Heart left ventricle (tissue), 16 donors: ENCODE measurements at regions of chr2 and their contacts with region 1.

Region 1: DNA sequence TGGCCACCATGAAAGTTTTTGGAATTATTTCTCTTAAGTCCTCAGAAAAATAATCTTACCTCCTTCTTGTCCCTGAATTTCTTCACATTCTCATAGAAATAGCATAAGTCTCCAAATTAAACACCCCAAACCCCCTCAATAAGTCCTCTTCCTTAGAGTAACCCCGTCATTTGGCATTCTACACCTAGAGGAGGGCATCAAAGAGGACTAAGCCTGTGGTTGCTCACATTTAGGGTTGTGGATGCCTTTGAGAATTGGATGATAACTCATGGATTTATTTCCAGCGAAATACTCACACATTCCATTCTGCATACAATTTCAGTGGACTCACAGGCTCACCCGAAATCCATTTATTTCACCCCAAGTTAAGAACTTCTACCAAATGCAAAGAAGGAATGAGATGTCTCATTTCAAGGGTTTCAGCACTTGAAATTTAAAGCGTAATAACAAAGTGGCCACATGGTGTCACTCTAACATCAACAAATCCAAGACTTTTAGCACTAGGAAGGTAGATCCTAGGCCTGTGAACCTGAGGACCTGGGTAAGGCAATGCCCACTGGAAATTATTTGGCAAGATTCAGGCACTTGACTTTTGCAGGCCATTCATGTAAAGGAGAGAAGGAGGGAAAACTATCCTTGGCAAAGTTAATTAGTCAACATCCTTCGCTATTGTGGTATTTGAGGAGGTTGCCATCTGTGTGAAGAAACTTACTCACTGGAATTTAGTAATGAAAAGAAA is 24.6 kb downstream of the DYTN start:
- DNase-seq: no peak
- ATAC-seq: peak in 3 of 4 donors; percentile 60 to 74 (median 67)
- H3K4me3 ChIP-seq: no peak overlapping the region
- H3K27ac ChIP-seq: no peak overlapping the region
- H3K4me1 ChIP-seq: no peaks in the 10 kb centered on the region
- H3K27me3 ChIP-seq: peaks cover 0 to 5% (median 0%) of the 10 kb centered on the region in 9 donors
- CTCF ChIP-seq: peak; percentile 48 to 78 (median 62)
- POLR2A ChIP-seq: no peak

Region 2: GRCh38 chr2:206736935-206737334 is 43.4 kb after region 1 on chr2:
- intact Hi-C with region 1: no loop called
- DNase-seq: no peak
- ATAC-seq: no peak
- H3K4me3 ChIP-seq: no peak overlapping the region
- H3K27ac ChIP-seq: no peak overlapping the region
- H3K4me1 ChIP-seq: no peaks in the 10 kb centered on the region
- H3K27me3 ChIP-seq: no peaks in the 10 kb centered on the region
- CTCF ChIP-seq: no peak
- POLR2A ChIP-seq: no peak

Region 3: GRCh38 chr2:206765242-206766056 is 71.9 kb after region 1 on chr2 and contains the starts of genes FASTKD2 and MDH1B:
- intact Hi-C with region 1: loop called in 1 of 10 experiments (anchors 5 kb)
- DNase-seq: peak; percentile 85 to 93 (median 91)
- ATAC-seq: peak; percentile 96 to 99 (median 98)
- H3K4me3 ChIP-seq: peak within 1 kb of the TSS; percentile 68 to 97 (median 84)
- H3K27ac ChIP-seq: peak within 1 kb of the TSS; percentile 82 to 95 (median 89)
- H3K4me1 ChIP-seq: peaks cover 3 to 43% (median 35%) of the 10 kb centered on the region in 12 donors
- H3K27me3 ChIP-seq: peaks cover 0 to 3% (median 0%) of the 10 kb centered on the region in 9 donors
- CTCF ChIP-seq: no peak
- POLR2A ChIP-seq: no peak
- total RNA-seq, gene FASTKD2: 32.6 to 48.0 (median 42.4) TPM
- total RNA-seq, gene MDH1B: 0.30 to 2.0 (median 1.1) TPM

Region 4: DNA sequence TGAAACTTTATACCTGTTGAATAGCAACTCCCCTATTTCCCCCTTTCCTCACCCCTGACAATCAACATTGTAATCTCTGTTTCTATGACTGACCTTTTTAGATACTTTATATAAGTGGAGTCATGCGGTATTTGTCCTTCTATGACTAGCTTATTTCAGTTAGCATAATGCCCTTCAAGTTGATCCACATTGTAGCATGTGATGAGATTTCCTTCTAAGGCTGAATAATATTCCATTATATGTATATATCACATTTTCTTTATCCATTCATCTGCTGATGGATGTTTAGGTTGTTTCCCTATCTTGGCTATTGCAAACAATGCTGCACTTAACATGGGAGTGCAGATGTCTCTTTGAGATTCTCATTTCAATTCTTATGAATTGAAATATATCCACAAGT is 81.3 kb after region 1 on chr2:
- intact Hi-C with region 1: loop called in 9 of 10 experiments (anchors 2 to 5 kb)
- DNase-seq: no peak
- ATAC-seq: no peak
- H3K4me3 ChIP-seq: no peak overlapping the region
- H3K27ac ChIP-seq: no peak overlapping the region
- H3K4me1 ChIP-seq: no peaks in the 10 kb centered on the region
- H3K27me3 ChIP-seq: no peaks in the 10 kb centered on the region
- CTCF ChIP-seq: no peak
- POLR2A ChIP-seq: no peak

Region 5: GRCh38 chr2:206783718-206784117 is 90.2 kb after region 1 on chr2:
- intact Hi-C with region 1: loop called (anchors 2 to 5 kb)
- DNase-seq: no peak
- ATAC-seq: peak in 1 of 4 donors; percentile 51
- H3K4me3 ChIP-seq: no peak overlapping the region
- H3K27ac ChIP-seq: no peak overlapping the region
- H3K4me1 ChIP-seq: no peaks in the 10 kb centered on the region
- H3K27me3 ChIP-seq: no peaks in the 10 kb centered on the region
- CTCF ChIP-seq: peak in 10 of 12 donors; percentile 11 to 54 (median 32)
- POLR2A ChIP-seq: no peak

Region 6: GRCh38 chr2:207032490-207032889 is 338.9 kb after region 1 on chr2:
- intact Hi-C with region 1: no loop called
- DNase-seq: no peak
- ATAC-seq: no peak
- H3K4me3 ChIP-seq: no peak overlapping the region
- H3K27ac ChIP-seq: no peak overlapping the region
- H3K4me1 ChIP-seq: no peaks in the 10 kb centered on the region
- H3K27me3 ChIP-seq: no peaks in the 10 kb centered on the region
- CTCF ChIP-seq: no peak
- POLR2A ChIP-seq: no peak

Region 7: DNA sequence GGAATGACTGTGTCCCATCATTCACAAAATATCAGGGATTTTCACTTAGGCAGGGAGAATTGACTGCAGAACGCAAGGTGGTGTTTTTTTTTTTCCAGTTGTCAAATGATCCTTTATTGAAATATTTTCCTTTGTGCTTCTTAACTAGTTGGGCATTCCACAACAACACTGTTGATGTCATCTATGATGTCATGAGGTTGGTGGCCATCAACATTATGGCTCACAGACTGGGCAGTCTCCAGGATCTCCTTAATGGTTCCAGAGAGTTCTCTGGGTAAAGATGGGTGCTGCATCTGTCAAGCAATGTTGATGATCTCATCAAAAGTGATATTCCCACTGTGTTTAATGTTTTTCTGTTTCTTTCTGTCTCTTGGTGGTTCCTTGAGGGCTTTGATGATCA is 1363.5 kb after region 1 on chr2:
- intact Hi-C with region 1: loop called in 1 of 10 experiments (anchors 10 kb)
- DNase-seq: no peak
- ATAC-seq: no peak
- H3K4me3 ChIP-seq: no peak overlapping the region
- H3K27ac ChIP-seq: no peak overlapping the region
- H3K4me1 ChIP-seq: no peaks in the 10 kb centered on the region
- H3K27me3 ChIP-seq: no peaks in the 10 kb centered on the region
- CTCF ChIP-seq: no peak
- POLR2A ChIP-seq: no peak